ENCODE measurements at regions of chr21 and their contacts with region 1.

Region 1: DNA sequence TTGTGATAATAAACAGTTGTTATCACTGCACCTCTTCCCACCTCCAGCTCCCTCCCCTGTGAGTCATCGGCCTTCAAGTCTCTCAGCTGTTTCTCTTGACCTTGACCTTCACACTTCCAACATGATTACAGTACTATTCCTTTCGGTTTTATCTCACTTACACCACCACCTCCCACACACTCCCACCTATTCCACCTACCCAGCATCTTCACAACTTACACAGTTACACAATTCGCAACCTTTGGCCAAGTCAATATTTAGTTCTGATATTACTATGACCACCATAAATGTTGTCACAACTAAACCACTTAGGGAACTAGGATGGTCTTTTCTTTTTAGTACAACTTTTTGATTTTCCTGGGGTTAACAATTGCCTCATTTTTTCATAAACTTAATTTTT is 60.2 kb downstream of the RIPK4 start:
- DNase-seq: no peak
- H3K4me3 ChIP-seq: no peak overlapping the region
- H3K4me3 Mint-ChIP-seq: no peak overlapping the region
- H3K27ac ChIP-seq: no peak overlapping the region
- H3K27ac Mint-ChIP-seq: no peak overlapping the region
- H3K4me1 ChIP-seq: peaks cover 2% of the 10 kb centered on the region in 2 donors
- H3K4me1 Mint-ChIP-seq: peaks cover 10% of the 10 kb centered on the region
- H3K27me3 ChIP-seq: peaks cover 3 to 20% of the 10 kb centered on the region in 2 donors
- H3K27me3 Mint-ChIP-seq: peaks cover 19 to 36% (median 27%) of the 10 kb centered on the region in 3 donors
- CTCF ChIP-seq: no peak

Region 2: GRCh38 chr21:41659791-41660560 is 46.7 kb before region 1 on chr21:
- intact Hi-C with region 1: loop called in 1 of 2 experiments (anchors 10 kb)
- DNase-seq: no peak
- H3K4me3 ChIP-seq: no peak overlapping the region
- H3K4me3 Mint-ChIP-seq: no peak overlapping the region
- H3K27ac ChIP-seq: no peak overlapping the region
- H3K27ac Mint-ChIP-seq: no peak overlapping the region
- H3K4me1 ChIP-seq: peaks cover 16 to 17% of the 10 kb centered on the region in 2 donors
- H3K4me1 Mint-ChIP-seq: peaks cover 19% of the 10 kb centered on the region
- H3K27me3 ChIP-seq: peaks cover 0 to 7% of the 10 kb centered on the region in 2 donors
- H3K27me3 Mint-ChIP-seq: peaks cover 2 to 12% (median 9%) of the 10 kb centered on the region in 3 donors
- CTCF ChIP-seq: no peak

Region 3: GRCh38 chr21:41671859-41672532 is 34.7 kb before region 1 on chr21:
- intact Hi-C with region 1: no loop called
- DNase-seq: peak in 2 of 3 donors; percentile 14 to 25
- H3K4me3 ChIP-seq: peak overlapping the region in 1 of 3 experiments; percentile 31
- H3K4me3 Mint-ChIP-seq: peak overlapping the region in 1 of 2 donors; percentile 81
- H3K27ac ChIP-seq: peak overlapping the region; percentile 5 to 8
- H3K27ac Mint-ChIP-seq: peak overlapping the region in 4 of 7 donors; percentile 28 to 68 (median 51)
- H3K4me1 ChIP-seq: peaks cover 17 to 26% of the 10 kb centered on the region in 2 donors
- H3K4me1 Mint-ChIP-seq: peaks cover 25% of the 10 kb centered on the region
- H3K27me3 ChIP-seq: no peaks in the 10 kb centered on the region
- H3K27me3 Mint-ChIP-seq: peaks cover 2 to 6% (median 3%) of the 10 kb centered on the region in 3 donors
- CTCF ChIP-seq: no peak